Activated CD4-positive, alpha-beta memory T cell treated with anti-CD3 and anti-CD28 coated beads, Interleukin-2, amount 10 ng/mL, durations not matched to agents 7 days and 5 days (primary cell): ENCODE measurements at regions of chr17 and their contacts with region 1.

Region 1: DNA sequence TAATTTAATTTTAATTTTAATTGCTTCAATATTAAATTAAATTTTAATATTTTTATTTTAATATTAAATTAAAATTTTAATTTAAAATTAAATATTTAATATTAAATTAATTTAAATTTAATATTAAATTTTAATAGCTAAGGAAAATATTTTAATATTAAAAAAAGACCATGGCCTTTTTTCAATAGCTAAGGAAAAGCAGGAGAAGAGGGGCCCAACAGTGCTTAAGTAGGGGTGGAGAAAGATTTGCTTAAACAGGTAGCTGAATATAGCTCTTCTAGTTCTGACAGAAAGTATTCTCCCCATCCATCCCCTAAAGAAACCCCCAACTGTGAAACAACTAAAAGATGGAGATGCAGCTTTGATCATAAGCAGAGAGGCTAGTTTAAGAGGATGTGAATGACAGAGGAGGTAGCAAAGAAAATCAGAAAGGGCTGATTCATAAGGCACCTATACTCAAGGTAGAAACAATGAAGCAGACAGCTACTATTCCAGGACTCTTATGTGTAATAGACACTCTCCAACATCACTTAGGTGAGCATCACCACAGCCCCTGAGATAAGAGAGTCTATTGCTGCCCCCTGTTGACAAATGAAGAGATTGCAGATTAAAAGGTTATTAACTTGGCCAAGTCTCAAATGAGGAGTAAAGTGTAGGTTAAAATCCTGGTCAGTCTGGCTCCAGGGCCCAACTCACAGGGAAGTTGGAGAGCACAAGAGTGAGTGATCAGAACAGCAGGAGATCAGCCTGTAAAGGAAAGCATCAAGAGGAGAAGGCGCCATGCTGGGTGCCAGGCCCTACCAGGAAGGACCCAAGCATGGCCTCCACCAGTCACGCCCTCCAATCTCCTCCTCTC is 7.8 kb upstream of the RNASEK start:
- DNase-seq: peak; percentile 36
- H3K4me3 Mint-ChIP-seq: no peak overlapping the region
- H3K27ac Mint-ChIP-seq: peak overlapping the region; percentile 31
- H3K4me1 Mint-ChIP-seq: peaks cover 27% of the 10 kb centered on the region
- H3K27me3 Mint-ChIP-seq: no peaks in the 10 kb centered on the region

Region 2: GRCh38 chr17:6913608-6914443 is 90.8 kb before region 1 on chr17:
- CTCF ChIA-PET with region 1: interaction called, 87 read pairs
- POLR2A ChIA-PET with region 1: interaction called, 11 read pairs
- DNase-seq: peak; percentile 74
- H3K4me3 Mint-ChIP-seq: peak overlapping the region; percentile 41
- H3K27ac Mint-ChIP-seq: no peak overlapping the region
- H3K4me1 Mint-ChIP-seq: peaks cover 37% of the 10 kb centered on the region
- H3K27me3 Mint-ChIP-seq: peaks cover 52% of the 10 kb centered on the region

Region 3: GRCh38 chr17:6953689-6954088 is 50.9 kb before region 1 on chr17:
- CTCF ChIA-PET with region 1: no interaction called
- POLR2A ChIA-PET with region 1: no interaction called
- DNase-seq: no peak
- H3K4me3 Mint-ChIP-seq: no peak overlapping the region
- H3K27ac Mint-ChIP-seq: no peak overlapping the region
- H3K4me1 Mint-ChIP-seq: peaks cover 4% of the 10 kb centered on the region
- H3K27me3 Mint-ChIP-seq: no peaks in the 10 kb centered on the region